Panc1 (cell line): ENCODE measurements at regions of chr11 and their contacts with region 1.

Region 1: DNA sequence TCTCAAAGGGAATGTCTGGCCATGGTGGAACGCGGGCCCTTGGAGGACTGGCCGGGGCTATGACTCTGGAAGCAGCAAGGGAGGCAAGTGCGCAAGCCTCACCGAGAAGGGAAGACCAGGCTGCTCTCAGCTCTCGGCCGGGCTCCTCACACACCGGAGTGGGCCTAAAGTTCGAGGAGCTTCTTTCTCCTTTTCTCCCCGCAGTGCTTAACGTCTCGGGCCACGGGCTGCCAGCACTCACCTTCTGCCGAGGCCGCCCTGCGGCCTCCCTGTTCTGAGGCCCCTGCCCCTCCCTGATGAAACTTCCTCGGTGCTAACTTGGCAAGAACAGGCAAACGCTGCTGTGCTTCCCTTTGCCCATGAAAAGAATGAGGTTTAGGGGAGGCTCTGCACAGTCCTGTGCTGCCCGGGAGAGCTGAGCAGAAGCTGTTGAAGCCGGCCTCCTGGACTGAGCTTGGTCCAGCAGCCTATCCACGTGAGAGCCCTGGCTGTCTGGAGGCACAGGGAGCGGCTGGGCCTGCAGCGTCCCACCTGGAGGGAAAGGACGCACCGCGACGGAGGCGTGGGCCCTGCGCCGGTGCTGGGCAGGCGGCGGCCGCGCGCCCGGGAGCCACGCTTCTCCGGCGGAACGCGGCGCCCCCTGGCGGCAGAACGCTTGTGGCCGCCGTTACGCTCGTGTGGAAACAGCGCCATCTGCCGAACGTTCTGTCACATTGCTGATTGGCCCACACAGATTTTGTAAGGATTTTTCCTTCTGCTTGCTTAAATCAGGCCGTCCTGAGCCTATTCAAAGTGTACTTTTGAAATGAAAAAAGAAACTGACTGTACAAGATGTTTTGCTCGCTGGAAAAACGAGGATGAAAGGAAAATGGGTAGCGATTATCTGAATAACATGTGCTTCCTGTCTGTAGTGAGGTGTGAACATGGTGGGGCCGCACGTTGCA is 65.0 kb upstream of the TMEM45B start:
- DNase-seq: peak; percentile 71
- ATAC-seq: peak; percentile 96
- H3K4me3 ChIP-seq: peak overlapping the region; percentile 8 to 53; a peak in 2 of 4 replicates
- H3K27ac ChIP-seq: no peak overlapping the region
- H3K4me1 ChIP-seq: no peaks in the 10 kb centered on the region
- H3K27me3 ChIP-seq: no peaks in the 10 kb centered on the region
- CTCF ChIP-seq: peak; percentile 99

Region 2: GRCh38 chr11:128884703-128885338 is 865.8 kb before region 1 on chr11:
- CTCF ChIA-PET with region 1: no interaction called
- POLR2A ChIA-PET with region 1: no interaction called
- in situ Hi-C with region 1: no loop called
- intact Hi-C with region 1: loop called (anchors 10 kb)
- DNase-seq: peak; percentile 69
- ATAC-seq: peak; percentile 90
- H3K4me3 ChIP-seq: no peak overlapping the region
- H3K27ac ChIP-seq: no peak overlapping the region
- H3K4me1 ChIP-seq: no peaks in the 10 kb centered on the region
- H3K27me3 ChIP-seq: peaks cover 25% of the 10 kb centered on the region
- CTCF ChIP-seq: peak; percentile 93

Region 3: DNA sequence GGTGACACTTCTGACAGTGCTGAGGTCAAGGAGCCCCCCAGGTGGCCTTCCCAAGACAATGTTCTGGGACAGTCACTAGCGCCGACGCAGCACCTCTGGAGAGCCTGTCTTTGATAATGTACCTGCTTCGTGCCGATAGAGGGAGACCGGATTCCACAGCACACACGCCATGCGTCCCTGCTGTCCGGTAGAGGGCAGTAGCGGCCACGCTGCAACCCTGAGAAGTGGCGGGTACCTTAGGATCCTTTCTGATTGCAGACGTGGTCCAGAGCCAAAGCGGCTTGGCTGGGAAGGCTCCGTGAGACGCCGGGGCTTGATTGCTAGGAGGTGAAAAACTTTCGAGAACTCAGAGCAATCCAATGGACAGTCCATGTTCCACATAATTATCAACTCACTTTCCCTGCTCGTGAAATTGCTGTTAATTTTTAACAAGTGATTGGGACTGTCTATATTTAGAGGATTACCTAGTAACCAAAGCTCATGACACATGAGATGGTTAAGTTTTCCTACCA is 386.4 kb before region 1 on chr11:
- CTCF ChIA-PET with region 1: interaction called, 7 read pairs
- POLR2A ChIA-PET with region 1: no interaction called
- in situ Hi-C with region 1: no loop called
- intact Hi-C with region 1: loop called (anchors 1 kb)
- DNase-seq: peak; percentile 90
- ATAC-seq: peak; percentile 100
- H3K4me3 ChIP-seq: 0 out of 4 replicates have a peak overlapping the region, but pooled peaks of 1 of the 2 experiments have one; percentile 9
- H3K27ac ChIP-seq: no peak overlapping the region
- H3K4me1 ChIP-seq: peaks cover 4% of the 10 kb centered on the region; the same call in 1 of the 2 replicates
- H3K27me3 ChIP-seq: peaks cover 43% of the 10 kb centered on the region
- CTCF ChIP-seq: peak; percentile 100

Region 4: GRCh38 chr11:129375751-129376657 is 374.6 kb before region 1 on chr11 and contains the start of gene BARX2:
- CTCF ChIA-PET with region 1: interaction called, 11 read pairs
- POLR2A ChIA-PET with region 1: no interaction called
- in situ Hi-C with region 1: no loop called
- intact Hi-C with region 1: no loop called
- DNase-seq: peak; percentile 35
- ATAC-seq: peak; percentile 86
- H3K4me3 ChIP-seq: peak within 1 kb of the TSS; percentile 51 to 62
- H3K27ac ChIP-seq: peak within 1 kb of the TSS; percentile 77
- H3K4me1 ChIP-seq: peaks cover 18% of the 10 kb centered on the region
- H3K27me3 ChIP-seq: peaks cover 32% of the 10 kb centered on the region
- CTCF ChIP-seq: peak; percentile 93
- total RNA-seq, gene BARX2: 3.9 TPM

Region 5: DNA sequence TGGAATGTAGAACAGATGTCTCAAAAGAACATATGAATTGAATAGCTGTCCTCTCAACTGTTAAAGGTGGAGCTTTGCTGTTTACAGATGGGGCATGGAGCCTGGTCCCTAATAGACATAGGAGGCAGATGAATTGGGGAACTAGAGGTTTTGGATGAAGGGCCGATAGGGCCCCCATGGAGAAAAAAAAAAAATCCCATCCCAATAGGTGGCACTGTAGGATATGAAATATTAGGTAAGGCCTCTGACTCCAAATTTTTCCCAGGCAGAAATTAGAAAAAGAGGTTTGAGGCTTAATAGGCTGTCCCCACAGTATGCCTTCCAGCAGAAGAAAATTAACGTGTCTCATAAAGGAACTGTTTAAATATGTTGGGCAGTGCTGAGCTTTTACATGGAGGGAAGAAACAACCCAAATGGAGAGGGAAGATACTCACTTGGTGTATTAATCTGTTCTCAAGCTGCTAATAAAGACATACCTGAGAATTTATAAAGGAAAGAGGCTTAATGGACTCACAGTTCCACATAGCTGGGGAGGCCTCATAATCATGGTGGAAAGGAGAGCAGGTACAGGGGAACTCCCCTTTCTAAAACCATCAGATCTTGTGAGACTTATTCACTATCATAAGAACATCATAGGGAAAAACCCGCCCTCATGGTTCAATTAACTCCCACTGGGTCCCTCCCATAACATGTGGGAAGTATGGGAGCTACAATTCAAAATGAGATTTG is 34.9 kb after region 1 on chr11:
- CTCF ChIA-PET with region 1: no interaction called
- POLR2A ChIA-PET with region 1: no interaction called
- in situ Hi-C with region 1: no loop called
- intact Hi-C with region 1: no loop called
- DNase-seq: no peak
- ATAC-seq: peak; percentile 65; the same call in 1 of the 2 replicates
- H3K4me3 ChIP-seq: no peak overlapping the region
- H3K27ac ChIP-seq: no peak overlapping the region
- H3K4me1 ChIP-seq: no peaks in the 10 kb centered on the region
- H3K27me3 ChIP-seq: peaks cover 5% of the 10 kb centered on the region
- CTCF ChIP-seq: peak; percentile 74